B cell (primary cell): ENCODE measurements at regions of chrX and their contacts with region 1.

Region 1: DNA sequence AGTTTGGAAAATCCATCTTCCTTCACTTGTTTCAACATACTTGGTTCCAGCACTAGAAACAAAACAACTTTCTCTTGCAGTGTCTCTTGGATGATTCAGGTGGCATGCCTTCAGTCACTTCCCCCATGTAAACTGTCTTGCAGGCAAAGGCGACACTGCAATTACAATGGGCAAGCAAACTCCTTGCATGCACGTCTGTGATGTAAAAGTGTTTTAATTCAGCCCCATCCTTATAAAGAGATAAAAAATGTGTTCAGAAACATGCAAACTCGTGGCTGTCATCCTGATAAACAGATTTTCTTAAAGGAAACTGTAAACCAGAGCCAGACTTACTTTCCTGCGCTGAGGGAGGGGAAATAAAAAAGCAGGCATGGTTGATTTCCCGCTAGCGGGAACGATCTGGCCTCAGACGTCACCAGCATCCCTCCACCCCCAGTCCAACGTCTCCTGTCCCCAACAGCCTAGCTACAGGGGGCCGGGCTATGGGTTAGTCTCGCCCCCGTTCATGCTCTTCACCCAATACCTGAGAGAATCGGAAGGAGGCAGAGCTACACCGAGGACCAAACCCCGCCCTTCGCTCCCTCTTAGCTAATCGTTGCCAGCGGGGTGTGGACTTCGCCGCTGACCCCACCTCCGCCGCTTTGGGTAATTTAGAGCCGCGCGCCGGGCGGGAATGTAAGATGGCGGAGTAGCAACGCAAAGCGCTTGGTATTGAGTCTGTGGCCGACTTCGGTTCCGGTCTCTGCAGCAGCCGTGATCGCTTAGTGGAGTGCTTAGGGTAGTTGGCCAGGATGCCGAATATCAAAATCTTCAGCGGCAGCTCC is at the start of gene PRPS1:
- DNase-seq: peak; percentile 91
- ATAC-seq: peak; percentile 99
- H3K4me3 ChIP-seq: peak within 1 kb of the TSS; percentile 51 to 83 (median 75)
- H3K4me3 Mint-ChIP-seq: peak within 1 kb of the TSS; percentile 97
- H3K27ac ChIP-seq: peak within 1 kb of the TSS; percentile 80
- H3K27ac Mint-ChIP-seq: peak within 1 kb of the TSS; percentile 92
- H3K4me1 ChIP-seq: peaks cover 8 to 19% of the 10 kb centered on the region in 2 donors
- H3K4me1 Mint-ChIP-seq: peaks cover 31% of the 10 kb centered on the region
- H3K27me3 ChIP-seq: no peaks in the 10 kb centered on the region
- H3K27me3 Mint-ChIP-seq: no peaks in the 10 kb centered on the region
- CTCF ChIP-seq: no peak
- total RNA-seq, gene PRPS1: 45.0 and 52.1 TPM in 2 replicates

Region 2: DNA sequence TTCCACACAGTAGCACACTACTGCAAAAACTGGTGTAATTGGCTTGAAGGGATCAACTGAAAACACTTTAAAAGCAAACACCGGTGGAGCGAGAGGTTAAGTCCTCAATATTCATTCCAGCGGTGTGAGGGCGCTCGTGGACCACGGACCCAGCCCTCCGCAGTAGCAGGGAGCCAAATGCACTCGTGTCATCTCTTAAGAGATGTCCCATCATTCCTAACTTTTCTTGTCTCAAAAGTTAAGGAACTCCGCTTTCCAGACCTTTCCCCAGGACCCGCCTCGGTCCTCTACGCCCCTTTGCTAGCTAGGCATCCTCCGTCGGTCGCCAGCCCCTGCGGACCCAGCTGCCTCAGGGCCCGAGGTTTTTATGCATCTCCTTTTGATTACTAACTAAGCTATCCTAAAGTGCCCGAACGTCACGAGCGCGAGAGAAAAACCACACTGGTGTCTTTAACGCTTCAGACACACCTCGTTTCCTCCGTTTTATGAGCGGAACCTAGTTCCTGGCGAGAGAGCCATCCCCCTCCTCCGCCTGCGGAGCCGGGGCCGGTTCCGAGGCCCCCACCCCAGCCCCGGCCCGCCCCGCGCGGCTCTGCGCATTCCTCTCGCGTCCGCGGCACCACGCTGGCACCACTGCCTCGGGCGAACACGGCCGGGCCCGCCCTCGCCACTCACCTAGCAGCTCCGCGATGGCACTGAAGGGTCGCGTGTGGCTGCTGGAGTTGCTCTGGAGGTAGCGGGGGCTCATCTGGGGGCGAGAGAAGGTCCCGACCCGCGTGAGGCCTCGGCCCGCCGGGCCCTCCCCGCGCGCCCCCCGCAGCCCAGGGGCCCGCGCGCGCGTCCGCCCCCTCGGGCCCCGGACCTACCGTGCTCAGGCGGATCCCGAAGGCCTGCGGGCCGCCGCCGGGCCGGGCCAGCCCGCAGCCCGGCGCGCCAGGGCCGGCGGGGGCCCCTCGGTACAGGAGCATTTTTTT is 628.8 kb before region 1 on chrX:
- CTCF ChIA-PET with region 1: no interaction called
- POLR2A ChIA-PET with region 1: no interaction called
- intact Hi-C with region 1: loop called (anchors 5 kb)
- DNase-seq: peak; percentile 61
- ATAC-seq: peak; percentile 39
- H3K4me3 ChIP-seq: peak overlapping the region in 4 of 5 experiments; percentile 42 to 67 (median 54)
- H3K4me3 Mint-ChIP-seq: peak overlapping the region; percentile 81
- H3K27ac ChIP-seq: no peak overlapping the region
- H3K27ac Mint-ChIP-seq: peak overlapping the region; percentile 64
- H3K4me1 ChIP-seq: peaks cover 3 to 7% of the 10 kb centered on the region in 2 donors
- H3K4me1 Mint-ChIP-seq: peaks cover 4% of the 10 kb centered on the region
- H3K27me3 ChIP-seq: no peaks in the 10 kb centered on the region
- H3K27me3 Mint-ChIP-seq: no peaks in the 10 kb centered on the region
- CTCF ChIP-seq: peak; percentile 33

Region 3: GRCh38 chrX:107118322-107119147 is 509.5 kb before region 1 on chrX and contains the start of gene RBM41:
- CTCF ChIA-PET with region 1: no interaction called
- POLR2A ChIA-PET with region 1: no interaction called
- intact Hi-C with region 1: loop called (anchors 2 kb)
- DNase-seq: peak; percentile 81
- ATAC-seq: peak; percentile 100
- H3K4me3 ChIP-seq: peak within 1 kb of the TSS; percentile 54 to 78 (median 70)
- H3K4me3 Mint-ChIP-seq: peak within 1 kb of the TSS; percentile 100
- H3K27ac ChIP-seq: peak within 1 kb of the TSS; percentile 50 to 73
- H3K27ac Mint-ChIP-seq: peak within 1 kb of the TSS; percentile 97
- H3K4me1 ChIP-seq: peaks cover 0 to 7% of the 10 kb centered on the region in 2 donors
- H3K4me1 Mint-ChIP-seq: peaks cover 28% of the 10 kb centered on the region
- H3K27me3 ChIP-seq: no peaks in the 10 kb centered on the region
- H3K27me3 Mint-ChIP-seq: no peaks in the 10 kb centered on the region
- CTCF ChIP-seq: no peak
- total RNA-seq, gene RBM41: 32.5 and 36.5 TPM in 2 replicates

Region 4: GRCh38 chrX:107205770-107206696 is 422.0 kb before region 1 on chrX and contains the starts of genes DNAAF6 and NUP62CL:
- CTCF ChIA-PET with region 1: no interaction called
- POLR2A ChIA-PET with region 1: no interaction called
- intact Hi-C with region 1: loop called (anchors 2 kb)
- DNase-seq: peak; percentile 80
- ATAC-seq: peak; percentile 95
- H3K4me3 ChIP-seq: peak within 1 kb of the TSS; percentile 9 to 69 (median 53)
- H3K4me3 Mint-ChIP-seq: peak within 1 kb of the TSS; percentile 95
- H3K27ac ChIP-seq: peak within 1 kb of the TSS; percentile 7 to 30
- H3K27ac Mint-ChIP-seq: peak within 1 kb of the TSS; percentile 72
- H3K4me1 ChIP-seq: peaks cover 3 to 4% of the 10 kb centered on the region in 2 donors
- H3K4me1 Mint-ChIP-seq: peaks cover 9% of the 10 kb centered on the region
- H3K27me3 ChIP-seq: no peaks in the 10 kb centered on the region
- H3K27me3 Mint-ChIP-seq: no peaks in the 10 kb centered on the region
- CTCF ChIP-seq: no peak
- total RNA-seq, gene DNAAF6: not detected in 2 replicates
- total RNA-seq, gene NUP62CL: 3.2 and 3.3 TPM in 2 replicates

Region 5: GRCh38 chrX:107504006-107504405 is 124.0 kb before region 1 on chrX:
- CTCF ChIA-PET with region 1: no interaction called
- POLR2A ChIA-PET with region 1: no interaction called
- intact Hi-C with region 1: no loop called
- DNase-seq: no peak
- ATAC-seq: no peak
- H3K4me3 ChIP-seq: no peak overlapping the region
- H3K4me3 Mint-ChIP-seq: no peak overlapping the region
- H3K27ac ChIP-seq: no peak overlapping the region
- H3K27ac Mint-ChIP-seq: no peak overlapping the region
- H3K4me1 ChIP-seq: no peaks in the 10 kb centered on the region
- H3K4me1 Mint-ChIP-seq: peaks cover 2% of the 10 kb centered on the region
- H3K27me3 ChIP-seq: peaks cover 0 to 13% (median 0%) of the 10 kb centered on the region in 4 experiments
- H3K27me3 Mint-ChIP-seq: peaks cover 27% of the 10 kb centered on the region
- CTCF ChIP-seq: no peak

Region 6: GRCh38 chrX:107654872-107655761 is 27.1 kb after region 1 on chrX:
- CTCF ChIA-PET with region 1: interaction called, 7 read pairs
- POLR2A ChIA-PET with region 1: no interaction called
- intact Hi-C with region 1: loop called (anchors 1 kb)
- DNase-seq: peak; percentile 74
- ATAC-seq: peak; percentile 85
- H3K4me3 ChIP-seq: no peak overlapping the region
- H3K4me3 Mint-ChIP-seq: no peak overlapping the region
- H3K27ac ChIP-seq: no peak overlapping the region
- H3K27ac Mint-ChIP-seq: peak overlapping the region; percentile 26
- H3K4me1 ChIP-seq: peaks cover 7% of the 10 kb centered on the region in 2 donors
- H3K4me1 Mint-ChIP-seq: peaks cover 9% of the 10 kb centered on the region
- H3K27me3 ChIP-seq: no peaks in the 10 kb centered on the region
- H3K27me3 Mint-ChIP-seq: no peaks in the 10 kb centered on the region
- CTCF ChIP-seq: peak; percentile 78